Sciatic nerve (tissue), 2 donors: ENCODE measurements at regions of chr13 and their contacts with region 1.

Region 1: GRCh38 chr13:49985129-49985528 is 11.7 kb upstream of the TRIM13 start:
- DNase-seq: no peak
- ATAC-seq: no peak

Region 2: GRCh38 chr13:49954674-49955491 is 30.2 kb before region 1 on chr13:
- intact Hi-C with region 1: no loop called
- DNase-seq: no peak
- ATAC-seq: no peak

Region 3: GRCh38 chr13:50026788-50027473 is 41.8 kb after region 1 on chr13:
- intact Hi-C with region 1: no loop called
- DNase-seq: no peak
- ATAC-seq: no peak

Region 4: GRCh38 chr13:50518781-50519201 is 533.7 kb after region 1 on chr13:
- intact Hi-C with region 1: loop called (anchors 5 kb)
- DNase-seq: no peak
- ATAC-seq: peak; percentile 33